A549 (cell line): ENCODE measurements at regions of chr19 and their contacts with region 1.

Region 1: DNA sequence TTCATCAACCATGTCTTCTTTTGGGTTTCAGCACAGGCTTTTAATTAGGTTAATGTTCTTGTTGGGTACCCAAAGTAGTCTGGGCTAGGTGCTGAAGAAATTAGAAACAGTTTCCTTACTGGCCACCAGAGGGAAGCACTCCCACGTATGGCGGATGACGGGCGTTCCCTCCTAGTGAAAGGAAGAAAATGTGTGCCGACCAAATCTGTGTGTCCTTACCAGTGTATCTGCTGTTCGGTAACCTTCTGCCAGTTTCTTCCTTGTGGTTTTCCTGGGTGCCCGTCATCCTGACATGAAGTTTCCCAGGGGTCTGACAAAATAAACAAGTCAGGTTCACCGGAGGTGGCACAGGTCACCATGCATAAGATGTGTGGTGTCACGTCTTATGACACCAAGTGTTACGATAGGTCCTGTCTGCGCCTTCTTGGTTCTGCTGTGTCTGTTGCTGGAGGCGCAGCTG is 6.0 kb upstream of the WDR88 start:
- DNase-seq: peak; percentile 85 to 97
- ATAC-seq: peak; percentile 95 to 96
- H3K4me3 ChIP-seq: no peak overlapping the region
- H3K27ac ChIP-seq: 0 out of 6 replicates have a peak overlapping the region, but pooled peaks of 1 of the 2 experiments have one; percentile 17
- H3K4me1 ChIP-seq: no peaks in the 10 kb centered on the region
- CTCF ChIP-seq: peak; percentile 98
- EP300 ChIP-seq: no peak
- POLR2A ChIP-seq: no peak
- RAD21 ChIP-seq: peak; percentile 85 to 86

Region 2: DNA sequence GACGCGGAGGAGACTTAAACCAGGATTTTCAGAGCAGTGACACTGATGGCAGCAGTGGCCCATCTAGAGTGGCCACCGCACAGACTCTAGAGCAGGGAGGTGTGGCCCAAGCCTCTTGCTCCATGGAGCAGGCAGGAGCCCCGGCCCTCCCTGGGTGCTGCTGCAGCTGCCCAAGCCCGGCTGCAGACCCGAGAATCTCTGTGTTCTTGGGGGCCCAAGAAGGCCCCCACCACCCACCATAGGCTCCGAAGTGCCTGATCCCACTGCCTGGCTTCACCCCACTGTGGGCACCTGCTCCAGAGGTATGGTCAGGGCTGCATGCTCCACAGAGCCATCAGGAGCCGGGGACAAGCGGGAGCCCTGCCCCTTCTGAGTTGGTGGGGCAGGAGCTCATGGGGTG is 190.3 kb before region 1 on chr19:
- CTCF ChIA-PET with region 1: no interaction called
- POLR2A ChIA-PET with region 1: no interaction called
- DNase-seq: no peak
- ATAC-seq: peak; percentile 42 to 45; a peak in 4 of 6 replicates
- H3K4me3 ChIP-seq: no peak overlapping the region
- H3K27ac ChIP-seq: no peak overlapping the region
- H3K4me1 ChIP-seq: no peaks in the 10 kb centered on the region
- CTCF ChIP-seq: no peak
- EP300 ChIP-seq: no peak
- POLR2A ChIP-seq: no peak
- RAD21 ChIP-seq: no peak

Region 3: DNA sequence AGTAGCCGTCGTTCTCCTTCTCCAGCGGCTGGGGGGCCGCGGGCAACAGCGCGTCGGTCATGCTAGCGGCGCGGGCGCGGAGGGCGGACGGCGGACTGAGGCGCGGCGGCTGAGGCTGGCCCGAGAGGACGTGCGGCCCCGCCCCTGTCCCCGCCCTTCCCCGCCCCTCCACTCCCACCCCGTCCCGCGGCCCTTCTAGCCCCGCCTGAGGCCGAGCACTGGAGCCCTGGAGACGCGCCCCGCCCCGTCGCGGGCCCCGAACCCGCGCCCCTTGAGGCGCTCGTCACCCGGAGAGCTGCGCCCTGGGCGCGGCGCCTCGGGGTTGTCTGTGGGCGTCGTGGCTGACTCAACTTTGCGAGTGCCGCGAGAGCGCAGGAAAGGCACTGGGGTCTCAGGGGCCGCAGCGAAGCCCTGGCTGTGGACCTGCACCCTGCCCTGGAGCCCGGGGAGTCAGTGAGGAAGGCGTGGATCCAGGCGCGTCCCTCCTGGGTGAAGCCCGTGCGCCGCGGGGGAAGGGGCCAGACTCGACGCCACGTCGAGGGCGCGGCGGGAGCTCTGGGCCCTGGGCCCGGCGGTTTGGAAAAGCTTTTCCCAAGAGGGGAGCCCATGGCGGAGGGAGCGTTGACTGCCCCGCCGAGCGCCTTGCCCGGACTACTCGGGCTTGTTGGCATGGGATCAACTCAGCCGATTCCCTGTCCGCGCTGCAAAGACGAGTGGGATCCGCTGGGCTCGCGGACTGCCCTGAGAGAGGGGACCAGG is 61.0 kb before region 1 on chr19 and contains the start of gene RHPN2:
- CTCF ChIA-PET with region 1: interaction called, 10 read pairs
- POLR2A ChIA-PET with region 1: no interaction called
- DNase-seq: peak; percentile 93 to 94
- ATAC-seq: peak; percentile 85 to 91
- H3K4me3 ChIP-seq: peak within 1 kb of the TSS; percentile 84
- H3K27ac ChIP-seq: peak within 1 kb of the TSS; percentile 90 to 93
- H3K4me1 ChIP-seq: peaks cover 61% of the 10 kb centered on the region
- CTCF ChIP-seq: no peak
- EP300 ChIP-seq: no peak
- POLR2A ChIP-seq: peak; percentile 90
- RAD21 ChIP-seq: peak in 1 of 2 experiments; percentile 50; a peak in 3 of 5 replicates
- polyA plus RNA-seq, gene RHPN2: 140 and 162 TPM in 2 replicates

Region 4: DNA sequence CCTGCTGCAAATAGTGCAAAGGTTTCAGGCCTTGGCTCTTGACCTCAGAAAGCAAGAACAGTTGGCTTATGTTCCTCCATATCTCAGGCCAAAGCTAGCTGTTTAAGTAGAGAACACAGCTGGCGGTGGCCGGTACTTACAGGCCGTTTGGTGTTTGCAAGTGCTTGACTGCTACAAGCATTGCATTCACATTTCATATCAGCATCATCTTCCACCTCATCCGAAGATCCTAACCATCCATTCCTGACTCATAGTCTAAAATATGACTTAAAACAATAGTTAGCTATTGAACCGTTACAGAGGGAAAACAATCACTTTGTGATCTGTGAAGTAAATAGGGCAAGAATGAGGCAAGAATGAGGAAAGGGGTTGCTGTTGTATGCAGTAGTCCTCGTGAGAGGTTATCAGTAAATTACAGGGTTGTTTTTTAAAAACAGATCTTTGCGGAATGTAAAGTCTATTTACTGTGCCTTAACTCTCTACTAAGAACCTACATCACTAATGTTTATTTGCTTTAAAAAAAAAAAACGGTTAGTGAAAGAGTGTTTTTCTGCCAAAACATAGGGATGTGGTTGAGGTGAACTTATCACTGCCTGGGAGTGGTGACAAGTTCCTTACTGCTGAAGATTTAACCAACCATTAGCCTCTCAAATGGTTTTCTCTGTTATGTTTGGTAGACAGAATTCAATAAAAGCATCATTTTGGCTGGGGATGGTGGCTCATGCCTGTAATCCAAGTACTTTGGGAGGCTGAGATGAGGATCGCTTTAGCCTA is 15.6 kb before region 1 on chr19:
- CTCF ChIA-PET with region 1: interaction called, 65 read pairs
- POLR2A ChIA-PET with region 1: no interaction called
- DNase-seq: peak in 1 of 2 experiments; percentile 39
- ATAC-seq: peak in 1 of 2 experiments; percentile 23; a peak in 2 of 6 replicates
- H3K4me3 ChIP-seq: no peak overlapping the region
- H3K27ac ChIP-seq: no peak overlapping the region
- H3K4me1 ChIP-seq: no peaks in the 10 kb centered on the region
- CTCF ChIP-seq: no peak
- EP300 ChIP-seq: no peak
- POLR2A ChIP-seq: no peak
- RAD21 ChIP-seq: no peak

Region 5: GRCh38 chr19:33156334-33156733 is 30.4 kb after region 1 on chr19:
- CTCF ChIA-PET with region 1: interaction called, 12 read pairs
- POLR2A ChIA-PET with region 1: no interaction called
- DNase-seq: no peak
- ATAC-seq: peak in 1 of 2 experiments; percentile 26; a peak in 1 of 6 replicates
- H3K4me3 ChIP-seq: no peak overlapping the region
- H3K27ac ChIP-seq: no peak overlapping the region
- H3K4me1 ChIP-seq: peaks cover 7% of the 10 kb centered on the region; the same call in 2 of the 3 replicates
- CTCF ChIP-seq: no peak
- EP300 ChIP-seq: no peak
- POLR2A ChIP-seq: no peak
- RAD21 ChIP-seq: no peak

Region 6: GRCh38 chr19:33186431-33187182 is 60.6 kb after region 1 on chr19:
- CTCF ChIA-PET with region 1: interaction called, 193 read pairs
- POLR2A ChIA-PET with region 1: interaction called, 3 read pairs
- DNase-seq: no peak
- ATAC-seq: no peak
- H3K4me3 ChIP-seq: no peak overlapping the region
- H3K27ac ChIP-seq: no peak overlapping the region
- H3K4me1 ChIP-seq: no peaks in the 10 kb centered on the region
- CTCF ChIP-seq: no peak
- EP300 ChIP-seq: no peak
- POLR2A ChIP-seq: no peak
- RAD21 ChIP-seq: no peak